Activated CD4-positive, alpha-beta memory T cell treated with anti-CD3 and anti-CD28 coated beads for 36 hours (primary cell): ENCODE measurements at regions of chr5 and their contacts with region 1.

Region 1: GRCh38 chr5:141968914-141969608 is at the start of gene RNF14:
- DNase-seq: peak; percentile 97
- H3K4me3 Mint-ChIP-seq: peak within 1 kb of the TSS; percentile 97
- H3K27ac Mint-ChIP-seq: peak within 1 kb of the TSS; percentile 96
- H3K4me1 Mint-ChIP-seq: peaks cover 28% of the 10 kb centered on the region
- H3K27me3 Mint-ChIP-seq: no peaks in the 10 kb centered on the region
- total RNA-seq, gene RNF14: 34.6 to 39.5 TPM

Region 2: DNA sequence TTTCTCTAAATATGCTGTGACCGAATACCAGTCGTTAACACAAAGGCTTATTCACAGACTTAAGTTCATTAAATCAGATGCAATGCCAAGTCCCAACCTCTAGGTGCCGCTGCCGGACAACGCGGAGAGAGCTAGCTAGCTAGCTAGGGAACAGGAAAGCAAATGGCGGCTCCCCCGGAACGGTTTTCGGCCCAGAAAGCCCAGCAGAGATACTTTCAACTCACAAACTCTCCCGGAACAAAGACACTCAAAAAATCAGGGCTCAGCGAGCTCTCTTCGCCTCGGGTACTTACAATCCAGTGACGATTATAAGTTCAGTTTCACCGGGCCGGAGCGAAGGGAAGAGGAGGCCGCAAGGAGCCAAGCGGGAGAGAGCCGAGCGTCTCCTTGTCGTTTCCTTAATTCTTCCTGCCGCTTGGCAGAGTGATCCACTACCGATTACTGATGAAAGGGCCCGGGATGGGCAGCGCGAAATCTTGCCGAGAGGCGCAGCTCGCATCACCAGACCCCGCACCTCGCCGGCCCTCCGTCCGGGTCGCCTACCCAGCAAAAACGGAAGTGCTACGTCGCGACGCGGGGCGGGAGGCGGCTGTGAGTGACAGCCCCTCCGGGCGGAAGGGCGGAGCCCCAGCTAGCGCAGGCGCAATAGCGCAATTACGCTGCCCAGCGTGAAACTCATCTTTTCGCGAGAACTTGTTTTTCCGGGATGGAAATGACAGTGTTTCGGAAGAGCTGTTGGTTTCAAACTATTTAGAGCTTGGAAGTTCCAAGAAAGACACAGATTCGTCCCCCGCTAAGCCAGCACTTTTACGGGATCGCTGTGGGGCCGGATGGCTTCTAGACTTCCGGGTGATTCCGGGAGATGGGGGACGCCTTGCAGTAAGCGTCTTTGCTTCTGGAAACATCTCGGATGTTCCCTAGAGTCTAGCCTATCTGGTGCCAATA is 648.6 kb before region 1 on chr5 and contains the start of gene TAF7:
- CTCF ChIA-PET with region 1: no interaction called
- POLR2A ChIA-PET with region 1: no interaction called
- intact Hi-C with region 1: loop called (anchors 10 kb)
- DNase-seq: peak; percentile 95
- H3K4me3 Mint-ChIP-seq: peak within 1 kb of the TSS; percentile 98
- H3K27ac Mint-ChIP-seq: peak within 1 kb of the TSS; percentile 99
- H3K4me1 Mint-ChIP-seq: peaks cover 23% of the 10 kb centered on the region
- H3K27me3 Mint-ChIP-seq: no peaks in the 10 kb centered on the region
- total RNA-seq, gene TAF7: 54.6 to 55.5 TPM

Region 3: DNA sequence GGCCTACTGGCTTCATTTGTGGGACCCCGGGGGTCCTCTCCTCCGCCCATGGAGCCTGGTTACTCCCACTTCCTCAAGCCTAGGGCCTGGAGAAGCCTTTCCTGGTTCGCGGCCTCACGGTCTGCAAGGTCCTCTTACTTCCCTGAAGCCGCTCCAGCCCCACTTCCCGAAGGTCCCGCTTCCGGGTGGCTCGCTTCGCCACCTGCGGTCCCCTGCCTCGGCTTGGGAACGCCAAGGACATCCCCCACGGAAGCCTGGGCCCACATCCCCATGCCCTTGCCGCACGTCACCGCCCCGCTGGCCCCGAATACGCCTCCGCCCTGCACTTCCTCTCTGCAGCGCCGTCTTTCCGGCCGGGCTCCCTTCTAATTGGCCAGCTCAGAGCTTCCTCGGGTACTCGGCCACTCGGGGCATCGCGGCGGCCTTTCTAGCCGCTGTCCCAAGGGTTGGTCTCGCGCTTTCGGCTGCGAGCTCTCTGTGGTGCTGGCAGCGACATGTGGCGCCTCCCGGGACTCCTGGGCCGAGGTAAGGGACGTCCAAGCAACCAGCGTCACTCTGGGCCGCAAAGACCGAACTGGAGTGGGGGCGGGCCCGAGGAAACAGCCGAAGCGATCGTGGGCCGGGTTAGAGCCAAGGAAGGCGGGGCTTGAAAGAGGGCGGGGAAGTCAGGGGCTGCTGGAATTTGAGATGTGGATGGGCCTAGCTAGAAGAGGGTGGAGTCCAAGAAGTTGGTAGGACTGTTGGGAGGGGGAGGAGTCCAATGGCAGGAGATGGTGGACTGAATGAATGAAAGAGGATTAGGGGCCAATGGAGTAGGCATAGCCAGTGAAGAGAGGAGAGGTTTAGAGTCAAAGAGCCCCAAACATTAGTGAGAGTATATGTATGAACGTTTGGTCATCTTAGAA is 45.4 kb before region 1 on chr5 and contains the start of gene DELE1:
- CTCF ChIA-PET with region 1: interaction called, 23 read pairs
- POLR2A ChIA-PET with region 1: interaction called, 9 read pairs
- intact Hi-C with region 1: loop called (anchors 1 kb)
- DNase-seq: peak; percentile 96
- H3K4me3 Mint-ChIP-seq: peak within 1 kb of the TSS; percentile 80
- H3K27ac Mint-ChIP-seq: peak within 1 kb of the TSS; percentile 96
- H3K4me1 Mint-ChIP-seq: peaks cover 18% of the 10 kb centered on the region
- H3K27me3 Mint-ChIP-seq: no peaks in the 10 kb centered on the region
- total RNA-seq, gene DELE1: 49.3 to 51.5 TPM

Region 4: GRCh38 chr5:142024771-142025304 is 55.8 kb after region 1 on chr5:
- CTCF ChIA-PET with region 1: no interaction called
- POLR2A ChIA-PET with region 1: interaction called, 3 read pairs
- intact Hi-C with region 1: loop called (anchors 2 kb)
- DNase-seq: peak; percentile 93
- H3K4me3 Mint-ChIP-seq: peak overlapping the region; percentile 88
- H3K27ac Mint-ChIP-seq: peak overlapping the region; percentile 99
- H3K4me1 Mint-ChIP-seq: peaks cover 17% of the 10 kb centered on the region
- H3K27me3 Mint-ChIP-seq: no peaks in the 10 kb centered on the region

Region 5: DNA sequence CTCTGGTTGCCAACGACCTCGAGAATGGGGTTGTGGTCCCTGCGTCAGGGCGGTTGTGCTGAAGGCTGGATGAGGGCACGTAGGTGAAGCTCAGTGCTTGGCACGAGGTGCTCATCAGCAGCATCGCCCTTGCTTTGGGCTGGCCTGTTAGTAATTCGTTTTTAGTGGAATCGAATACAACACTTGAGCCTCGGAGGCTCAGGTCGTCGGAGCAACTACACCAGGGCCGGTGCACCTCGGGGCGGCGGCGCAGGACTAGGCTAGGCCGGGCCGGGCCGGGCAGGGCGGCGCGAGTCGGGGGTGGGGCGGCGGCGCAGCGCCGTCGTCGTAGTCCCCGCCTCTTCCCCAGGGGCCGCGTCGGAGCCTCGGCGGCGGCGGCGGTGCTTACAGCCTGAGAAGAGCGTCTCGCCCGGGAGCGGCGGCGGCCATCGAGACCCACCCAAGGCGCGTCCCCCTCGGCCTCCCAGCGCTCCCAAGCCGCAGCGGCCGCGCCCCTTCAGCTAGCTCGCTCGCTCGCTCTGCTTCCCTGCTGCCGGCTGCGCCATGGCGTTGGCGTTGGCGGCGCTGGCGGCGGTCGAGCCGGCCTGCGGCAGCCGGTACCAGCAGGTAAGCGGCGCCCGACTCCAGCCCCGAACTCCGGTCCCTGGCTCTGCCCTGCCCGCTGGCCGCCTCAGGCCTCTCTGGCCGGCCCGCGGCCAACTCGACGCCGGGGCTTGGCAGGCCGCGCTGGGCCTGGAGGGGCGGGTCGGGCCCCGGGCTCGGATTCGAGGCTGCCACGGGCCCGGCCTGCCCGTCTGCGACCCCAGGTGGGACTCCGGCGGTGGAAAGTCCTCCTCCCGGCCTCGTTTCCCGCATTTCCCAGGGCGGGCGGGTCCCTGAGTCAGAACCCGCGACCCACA is 139.6 kb after region 1 on chr5 and contains the start of gene NDFIP1:
- CTCF ChIA-PET with region 1: interaction called, 6 read pairs
- POLR2A ChIA-PET with region 1: interaction called, 19 read pairs
- intact Hi-C with region 1: no loop called
- DNase-seq: peak; percentile 91
- H3K4me3 Mint-ChIP-seq: peak within 1 kb of the TSS; percentile 93
- H3K27ac Mint-ChIP-seq: peak within 1 kb of the TSS; percentile 97
- H3K4me1 Mint-ChIP-seq: peaks cover 71% of the 10 kb centered on the region
- H3K27me3 Mint-ChIP-seq: no peaks in the 10 kb centered on the region
- total RNA-seq, gene NDFIP1: 74.6 to 76.4 TPM